Activated T-helper 2 cell treated with anti-CD3 and anti-CD28 coated beads, Interferon-gamma antibody, Interleukin-2, Interleukin-4, amounts not matched to agents 10 μg/mL and 5 μg/mL and 100 μg/mL, durations not matched to agents 14 hours and 24 hours and 36 hours (primary cell): ENCODE measurements at regions of chr11 and their contacts with region 1.

Region 1: GRCh38 chr11:109946322-109946846 is 146.8 kb upstream of the ZC3H12C start:
- DNase-seq: peak; percentile 49
- H3K4me3 Mint-ChIP-seq: peak overlapping the region; percentile 43
- H3K27ac Mint-ChIP-seq: peak overlapping the region; percentile 65
- H3K4me1 Mint-ChIP-seq: peaks cover 14% of the 10 kb centered on the region
- H3K27me3 Mint-ChIP-seq: peaks cover 28% of the 10 kb centered on the region

Region 2: GRCh38 chr11:109984634-109985289 is 38.4 kb after region 1 on chr11:
- intact Hi-C with region 1: loop called (anchors 1 kb)
- DNase-seq: no peak
- H3K4me3 Mint-ChIP-seq: no peak overlapping the region
- H3K27ac Mint-ChIP-seq: peak overlapping the region; percentile 51
- H3K4me1 Mint-ChIP-seq: peaks cover 28% of the 10 kb centered on the region
- H3K27me3 Mint-ChIP-seq: peaks cover 15% of the 10 kb centered on the region

Region 3: GRCh38 chr11:110092515-110093404 is 146.4 kb after region 1 on chr11 and contains the start of gene ZC3H12C:
- intact Hi-C with region 1: loop called (anchors 1 kb)
- DNase-seq: peak; percentile 38
- H3K4me3 Mint-ChIP-seq: peak within 1 kb of the TSS; percentile 89
- H3K27ac Mint-ChIP-seq: peak within 1 kb of the TSS; percentile 95
- H3K4me1 Mint-ChIP-seq: peaks cover 36% of the 10 kb centered on the region
- H3K27me3 Mint-ChIP-seq: peaks cover 32% of the 10 kb centered on the region
- total RNA-seq, gene ZC3H12C: 16.7 and 17.5 TPM in 2 replicates

Region 4: DNA sequence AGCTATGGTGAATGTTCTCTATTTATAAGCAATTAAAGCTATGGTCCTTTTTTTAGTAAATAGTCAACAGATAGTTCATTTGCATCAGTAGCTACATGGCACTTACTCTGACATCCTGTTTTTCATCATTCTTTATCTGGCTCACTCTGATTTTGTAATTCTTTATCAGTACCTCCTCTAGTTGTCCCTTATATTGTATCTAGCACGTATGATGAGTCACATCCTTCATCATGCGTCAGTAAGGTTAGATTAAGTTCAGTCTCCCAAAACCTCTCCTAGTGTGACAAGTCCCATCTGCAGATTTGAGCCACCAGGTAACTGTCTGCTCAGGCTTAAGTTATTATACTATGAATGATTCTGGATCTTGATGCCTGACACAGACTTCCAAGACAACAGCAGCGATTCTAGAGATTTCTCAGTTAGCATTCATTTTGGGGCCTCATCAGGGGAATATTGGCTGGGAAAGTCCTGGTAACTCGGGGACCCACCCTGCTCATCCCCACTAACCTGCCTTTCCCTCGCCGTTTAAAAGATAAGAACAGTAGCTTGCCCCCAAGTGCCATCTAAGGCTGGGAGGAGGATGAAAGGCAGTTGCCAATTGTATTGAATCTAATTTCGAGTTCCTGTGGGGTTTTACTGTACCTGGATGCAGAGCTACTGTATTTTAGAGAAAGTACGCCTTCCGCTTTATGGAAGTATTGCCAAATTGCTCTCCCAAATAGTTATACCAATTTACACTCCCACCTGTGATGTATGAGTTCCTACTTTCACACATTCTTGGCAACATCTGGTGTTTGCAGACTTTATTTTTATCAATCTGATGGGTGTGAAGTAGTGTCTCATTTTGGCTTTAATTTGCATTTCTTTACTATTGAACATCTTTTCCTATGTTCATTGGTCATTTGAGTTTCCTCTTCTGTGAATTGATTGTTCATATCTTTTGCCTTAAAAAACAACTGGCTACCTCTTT is 202.7 kb after region 1 on chr11:
- intact Hi-C with region 1: loop called (anchors 5 kb)
- DNase-seq: no peak
- H3K4me3 Mint-ChIP-seq: no peak overlapping the region
- H3K27ac Mint-ChIP-seq: no peak overlapping the region
- H3K4me1 Mint-ChIP-seq: peaks cover 19% of the 10 kb centered on the region
- H3K27me3 Mint-ChIP-seq: peaks cover 13% of the 10 kb centered on the region

Region 5: DNA sequence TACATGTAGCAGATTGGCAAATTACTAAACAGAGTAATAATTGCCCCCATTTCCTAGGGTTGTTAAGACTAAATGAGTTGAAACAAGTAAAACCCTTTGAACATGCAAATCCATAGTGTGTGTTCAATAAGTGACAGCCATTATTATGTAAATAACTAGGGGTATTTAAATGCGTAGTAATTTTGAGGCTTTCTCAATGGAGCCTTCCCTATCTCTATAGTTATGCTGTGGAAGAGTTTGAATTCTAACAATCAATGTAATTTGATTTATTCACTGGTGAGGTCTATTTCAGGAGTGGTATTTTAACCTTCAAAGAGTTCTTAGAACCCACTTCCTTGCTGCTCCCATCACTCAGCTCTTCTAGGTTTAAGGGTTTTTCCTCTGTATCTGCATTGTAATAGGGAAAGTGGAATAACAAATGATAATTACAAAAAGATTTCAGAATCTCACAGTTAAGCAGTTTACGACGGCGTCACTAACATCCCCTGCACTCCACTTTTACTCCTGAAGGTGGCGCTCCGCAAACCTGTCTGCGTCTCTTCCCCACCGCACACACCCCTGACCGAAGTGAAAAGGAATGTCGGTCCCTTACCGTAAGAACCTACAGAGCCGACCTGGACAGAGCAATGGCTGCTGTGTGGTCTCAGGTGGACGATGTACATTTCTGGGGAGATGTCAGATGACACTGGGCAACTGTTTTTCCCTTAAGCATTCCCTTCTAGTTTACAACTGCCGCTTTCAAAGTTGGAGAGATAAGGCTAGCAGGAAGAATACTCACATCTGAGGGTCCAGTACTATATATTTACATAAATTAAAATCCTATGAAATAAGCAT is 227.6 kb after region 1 on chr11:
- intact Hi-C with region 1: loop called (anchors 5 kb)
- DNase-seq: peak; percentile 42
- H3K4me3 Mint-ChIP-seq: no peak overlapping the region
- H3K27ac Mint-ChIP-seq: no peak overlapping the region
- H3K4me1 Mint-ChIP-seq: peaks cover 12% of the 10 kb centered on the region
- H3K27me3 Mint-ChIP-seq: peaks cover 19% of the 10 kb centered on the region

Region 6: GRCh38 chr11:110251837-110252236 is 305.5 kb after region 1 on chr11:
- intact Hi-C with region 1: no loop called
- DNase-seq: no peak
- H3K4me3 Mint-ChIP-seq: no peak overlapping the region
- H3K27ac Mint-ChIP-seq: no peak overlapping the region
- H3K4me1 Mint-ChIP-seq: peaks cover 16% of the 10 kb centered on the region
- H3K27me3 Mint-ChIP-seq: no peaks in the 10 kb centered on the region

Region 7: DNA sequence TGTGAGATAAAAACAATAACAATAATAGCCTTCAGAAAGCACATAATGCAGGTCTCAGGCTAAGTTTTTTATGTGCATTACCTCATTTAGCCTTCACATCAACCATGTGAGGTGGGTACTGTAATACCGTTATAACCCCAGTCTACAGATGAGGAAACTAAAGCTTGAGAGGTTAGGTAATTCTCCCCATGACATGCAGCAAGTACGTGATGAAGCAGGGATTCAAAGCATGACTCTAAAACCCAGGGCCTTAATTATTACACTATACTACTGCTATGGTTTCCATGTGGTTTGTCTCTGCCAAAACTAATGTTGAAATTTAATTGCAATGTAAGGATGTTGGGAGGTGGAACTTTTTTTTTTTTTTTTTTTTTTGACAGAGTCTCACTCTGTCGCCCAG is 445.7 kb after region 1 on chr11:
- intact Hi-C with region 1: no loop called
- DNase-seq: no peak
- H3K4me3 Mint-ChIP-seq: no peak overlapping the region
- H3K27ac Mint-ChIP-seq: no peak overlapping the region
- H3K4me1 Mint-ChIP-seq: no peaks in the 10 kb centered on the region
- H3K27me3 Mint-ChIP-seq: peaks cover 14% of the 10 kb centered on the region

Region 8: GRCh38 chr11:110429731-110430266 is 483.4 kb after region 1 on chr11 and contains the start of gene FDX1:
- intact Hi-C with region 1: loop called (anchors 2 kb)
- DNase-seq: peak; percentile 78
- H3K4me3 Mint-ChIP-seq: peak within 1 kb of the TSS; percentile 98
- H3K27ac Mint-ChIP-seq: peak within 1 kb of the TSS; percentile 94
- H3K4me1 Mint-ChIP-seq: peaks cover 41% of the 10 kb centered on the region
- H3K27me3 Mint-ChIP-seq: no peaks in the 10 kb centered on the region
- total RNA-seq, gene FDX1: 13.0 and 13.1 TPM in 2 replicates